ENCODE measurements at regions of chr11 and their contacts with region 1.

Region 1: GRCh38 chr11:33065445-33066178 is 26.2 kb downstream of the TCP11L1 start:
- DNase-seq: peak; percentile 66
- H3K4me3 ChIP-seq: no peak overlapping the region
- H3K27ac ChIP-seq: no peak overlapping the region
- H3K4me1 ChIP-seq: peaks cover under 1% of the 10 kb centered on the region
- CTCF ChIP-seq: peak; percentile 88

Region 2: DNA sequence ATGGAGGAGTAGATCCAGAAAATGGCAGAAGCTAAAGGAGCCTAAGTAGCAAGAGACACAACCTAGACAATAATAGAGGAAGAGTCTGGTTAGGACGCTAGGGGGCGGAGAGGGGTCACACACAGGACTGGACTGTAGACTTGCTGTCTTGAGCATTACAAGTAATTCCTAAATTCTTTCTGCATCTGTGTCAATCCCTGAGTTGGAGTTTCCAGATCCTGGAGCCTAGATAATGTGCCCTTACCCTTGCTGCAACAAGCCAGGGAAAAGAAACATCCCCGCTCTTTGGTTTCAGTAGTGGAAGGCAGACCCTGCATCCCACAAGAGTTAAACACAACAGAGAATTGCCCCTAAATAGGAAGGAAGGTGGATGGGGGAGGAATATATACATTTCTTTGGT is 256.3 kb before region 1 on chr11:
- CTCF ChIA-PET with region 1: no interaction called
- POLR2A ChIA-PET with region 1: no interaction called
- intact Hi-C with region 1: loop called (anchors 2 kb)
- DNase-seq: peak; percentile 62
- H3K4me3 ChIP-seq: no peak overlapping the region
- H3K27ac ChIP-seq: no peak overlapping the region
- H3K4me1 ChIP-seq: no peaks in the 10 kb centered on the region
- CTCF ChIP-seq: peak; percentile 92

Region 3: DNA sequence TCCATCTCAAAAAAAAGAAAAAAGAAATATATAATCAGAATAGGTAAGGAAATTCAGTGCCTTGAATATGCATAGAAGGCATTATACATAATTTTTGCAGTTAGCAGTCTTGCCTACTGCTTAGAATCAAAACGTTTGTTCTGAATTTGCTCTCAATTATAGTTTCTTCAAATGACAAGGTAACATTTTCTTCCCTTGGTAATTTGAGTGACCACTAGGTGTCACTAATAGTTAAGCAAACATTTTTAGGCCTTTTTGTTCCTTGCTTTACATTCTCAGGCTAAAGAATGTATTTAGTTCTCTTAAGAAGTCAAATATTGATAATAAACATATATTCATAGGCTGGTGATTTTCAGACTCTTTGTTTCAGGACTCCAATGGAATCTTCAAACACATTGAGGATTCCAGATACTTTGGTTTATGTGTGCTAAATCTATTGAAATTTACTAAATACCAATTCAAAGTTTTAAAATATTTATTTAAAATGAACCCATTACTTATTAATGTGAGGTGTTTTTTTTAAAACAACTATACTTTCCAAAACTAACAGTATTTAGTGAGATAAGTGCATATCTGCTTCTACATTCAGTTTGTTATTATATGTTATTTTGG is 105.0 kb before region 1 on chr11:
- CTCF ChIA-PET with region 1: no interaction called
- POLR2A ChIA-PET with region 1: no interaction called
- intact Hi-C with region 1: loop called (anchors 1 kb)
- DNase-seq: peak; percentile 60
- H3K4me3 ChIP-seq: no peak overlapping the region
- H3K27ac ChIP-seq: no peak overlapping the region
- H3K4me1 ChIP-seq: no peaks in the 10 kb centered on the region
- CTCF ChIP-seq: peak; percentile 91

Region 4: GRCh38 chr11:33110083-33110482 is 44.5 kb after region 1 on chr11:
- CTCF ChIA-PET with region 1: no interaction called
- POLR2A ChIA-PET with region 1: no interaction called
- intact Hi-C with region 1: no loop called
- DNase-seq: no peak
- H3K4me3 ChIP-seq: no peak overlapping the region
- H3K27ac ChIP-seq: no peak overlapping the region
- H3K4me1 ChIP-seq: no peaks in the 10 kb centered on the region
- CTCF ChIP-seq: no peak

Measured in OCI-LY7 (cell line).